ENCODE measurements at regions of chr7 and their contacts with region 1.

Region 1: DNA sequence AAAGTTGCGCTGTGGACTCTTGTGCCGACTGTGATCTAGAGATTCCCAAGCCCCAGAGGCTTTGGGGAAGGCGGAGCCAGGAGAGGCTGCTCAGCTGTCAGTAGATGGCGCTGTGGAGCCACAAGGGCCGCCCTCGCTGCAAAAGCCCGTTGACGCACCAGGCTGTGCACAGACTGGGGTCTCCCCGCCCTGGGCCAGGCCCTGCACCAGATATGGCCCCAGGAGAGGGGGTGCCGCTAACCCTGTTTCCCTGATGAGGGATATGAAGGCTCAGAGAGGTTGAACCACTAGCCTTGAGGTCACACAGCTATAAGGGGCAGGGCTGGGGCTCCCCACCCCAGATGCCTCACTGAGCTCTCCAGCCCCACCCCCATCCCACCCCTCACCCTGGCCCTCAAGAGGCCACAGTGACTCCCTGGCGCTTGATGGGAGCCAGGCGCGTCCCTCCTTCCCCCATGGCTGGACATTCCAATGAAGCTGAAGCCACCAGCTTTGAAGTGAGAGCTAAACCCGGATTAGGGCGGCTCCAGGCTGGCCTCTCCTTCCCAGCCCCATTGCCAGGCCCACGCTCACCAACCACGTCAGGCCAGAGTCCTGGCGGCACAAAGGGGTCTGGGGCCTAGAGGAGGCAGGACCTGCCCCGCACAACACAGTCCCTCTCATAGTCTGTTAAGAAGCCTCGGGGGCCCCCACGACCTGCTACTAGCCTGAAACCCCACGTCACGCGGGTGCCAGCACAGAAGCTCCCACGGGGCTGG is 26.4 kb downstream of the MYL10 start:
- DNase-seq: peak; percentile 52
- ATAC-seq: peak; percentile 97
- H3K4me3 ChIP-seq: no peak overlapping the region
- H3K27ac ChIP-seq: no peak overlapping the region
- H3K4me1 ChIP-seq: peaks cover 8% of the 10 kb centered on the region; the same call in 1 of the 2 replicates
- H3K27me3 ChIP-seq: no peaks in the 10 kb centered on the region
- CTCF ChIP-seq: peak; percentile 97

Region 2: DNA sequence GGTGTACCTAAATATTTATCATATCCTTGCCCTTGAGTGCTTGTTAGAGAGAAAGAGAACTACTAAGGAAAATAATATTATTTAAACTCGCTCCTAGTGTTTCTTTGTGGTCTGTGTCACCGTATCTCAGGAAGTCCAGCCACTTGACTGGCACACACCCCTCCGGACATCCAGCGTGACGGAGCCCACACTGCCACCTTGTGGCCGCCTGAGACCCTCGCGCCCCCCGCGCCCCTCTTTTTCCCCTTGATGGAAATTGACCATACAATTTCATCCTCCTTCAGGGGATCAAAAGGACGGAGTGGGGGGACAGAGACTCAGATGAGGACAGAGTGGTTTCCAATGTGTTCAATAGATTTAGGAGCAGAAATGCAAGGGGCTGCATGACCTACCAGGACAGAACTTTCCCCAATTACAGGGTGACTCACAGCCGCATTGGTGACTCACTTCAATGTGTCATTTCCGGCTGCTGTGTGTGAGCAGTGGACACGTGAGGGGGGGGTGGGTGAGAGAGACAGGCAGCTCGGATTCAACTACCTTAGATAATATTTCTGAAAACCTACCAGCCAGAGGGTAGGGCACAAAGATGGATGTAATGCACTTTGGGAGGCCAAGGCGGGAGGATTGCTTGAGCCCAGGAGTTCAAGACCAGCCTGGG is 464.3 kb before region 1 on chr7:
- CTCF ChIA-PET with region 1: no interaction called
- POLR2A ChIA-PET with region 1: no interaction called
- in situ Hi-C with region 1: no loop called
- intact Hi-C with region 1: no loop called
- DNase-seq: peak; percentile 100
- ATAC-seq: peak; percentile 84
- H3K4me3 ChIP-seq: no peak overlapping the region
- H3K27ac ChIP-seq: peak overlapping the region; percentile 91
- H3K4me1 ChIP-seq: peaks cover 39% of the 10 kb centered on the region
- H3K27me3 ChIP-seq: no peaks in the 10 kb centered on the region
- CTCF ChIP-seq: peak; percentile 94

Region 3: DNA sequence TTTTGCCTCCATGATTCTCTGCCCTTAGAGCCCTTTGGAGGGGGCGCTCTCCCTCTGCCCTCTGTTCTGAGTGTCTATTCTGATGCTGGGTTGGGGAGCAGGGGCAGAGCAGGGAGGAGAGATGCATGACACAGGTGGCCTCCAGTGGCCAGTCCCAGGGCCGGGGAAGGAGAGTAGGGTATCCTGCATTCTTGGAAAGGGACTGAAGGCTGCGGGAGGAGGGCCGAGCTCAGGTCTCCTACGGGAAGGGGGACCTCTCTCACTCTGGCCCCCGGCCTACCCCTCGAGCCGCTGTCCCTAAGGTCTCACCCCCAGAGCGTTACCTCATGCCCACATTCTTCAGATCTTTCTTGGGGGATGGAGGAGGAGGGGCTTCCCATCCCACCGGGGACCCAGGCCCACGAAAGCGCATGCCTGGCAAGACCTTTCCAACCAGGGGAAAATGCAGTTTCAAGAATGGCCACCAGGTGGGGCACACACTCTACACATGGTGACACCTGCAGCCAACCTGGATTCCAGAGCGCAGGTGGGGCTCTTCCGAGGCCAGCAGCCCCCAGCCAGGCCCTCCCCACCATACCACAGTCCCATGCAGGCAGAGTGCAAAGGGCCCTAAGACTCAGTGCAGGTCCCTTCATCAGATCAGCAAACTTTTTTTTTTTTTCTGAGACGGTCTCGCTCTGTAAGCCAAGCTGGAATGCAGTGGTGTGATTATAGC is 60.0 kb before region 1 on chr7:
- CTCF ChIA-PET with region 1: no interaction called
- POLR2A ChIA-PET with region 1: no interaction called
- in situ Hi-C with region 1: no loop called
- intact Hi-C with region 1: no loop called
- DNase-seq: peak; percentile 48
- ATAC-seq: peak; percentile 70
- H3K4me3 ChIP-seq: peak overlapping the region in 1 of 2 experiments; percentile 19; a peak in 1 of 4 replicates
- H3K27ac ChIP-seq: no peak overlapping the region
- H3K4me1 ChIP-seq: peaks cover 13% of the 10 kb centered on the region
- H3K27me3 ChIP-seq: no peaks in the 10 kb centered on the region
- CTCF ChIP-seq: peak; percentile 94

Region 4: DNA sequence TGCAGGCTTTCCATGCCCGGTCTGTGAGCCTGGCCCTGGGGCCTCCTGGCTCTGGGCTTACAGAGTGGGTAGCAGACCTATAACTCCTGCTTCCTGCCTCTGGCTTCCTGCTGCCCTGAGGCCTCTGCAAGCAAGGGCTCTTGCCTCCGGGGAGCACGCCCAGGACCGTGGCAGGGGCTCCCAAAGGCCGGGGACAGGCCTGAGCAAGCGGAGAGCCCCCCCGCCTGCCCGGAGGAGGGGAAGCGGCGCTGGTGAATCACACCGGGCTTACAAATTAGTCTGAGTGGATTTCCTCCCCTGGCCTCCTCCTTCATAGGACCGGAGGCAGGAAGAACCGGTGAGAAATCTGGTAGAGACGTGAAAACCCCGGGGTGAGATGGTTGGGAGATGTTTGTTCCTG is 27.9 kb after region 1 on chr7:
- CTCF ChIA-PET with region 1: interaction called, 12 read pairs
- POLR2A ChIA-PET with region 1: no interaction called
- in situ Hi-C with region 1: no loop called
- intact Hi-C with region 1: no loop called
- DNase-seq: no peak
- ATAC-seq: peak; percentile 71
- H3K4me3 ChIP-seq: peak overlapping the region in 1 of 2 experiments; percentile 0; a peak in 1 of 4 replicates
- H3K27ac ChIP-seq: no peak overlapping the region
- H3K4me1 ChIP-seq: peaks cover 15% of the 10 kb centered on the region
- H3K27me3 ChIP-seq: no peaks in the 10 kb centered on the region
- CTCF ChIP-seq: no peak

Region 5: GRCh38 chr7:101644879-101645278 is 42.2 kb after region 1 on chr7:
- CTCF ChIA-PET with region 1: interaction called, 10 read pairs
- POLR2A ChIA-PET with region 1: no interaction called
- in situ Hi-C with region 1: no loop called
- intact Hi-C with region 1: no loop called
- DNase-seq: no peak
- ATAC-seq: peak; percentile 64
- H3K4me3 ChIP-seq: peak overlapping the region in 1 of 2 experiments; percentile 31; a peak in 2 of 4 replicates
- H3K27ac ChIP-seq: no peak overlapping the region
- H3K4me1 ChIP-seq: peaks cover 7% of the 10 kb centered on the region
- H3K27me3 ChIP-seq: no peaks in the 10 kb centered on the region
- CTCF ChIP-seq: no peak

Region 6: GRCh38 chr7:101688183-101688831 is 85.6 kb after region 1 on chr7:
- CTCF ChIA-PET with region 1: interaction called, 3 read pairs
- POLR2A ChIA-PET with region 1: no interaction called
- in situ Hi-C with region 1: no loop called
- intact Hi-C with region 1: loop called (anchors 10 kb)
- DNase-seq: no peak
- ATAC-seq: peak; percentile 95
- H3K4me3 ChIP-seq: peak overlapping the region; percentile 31 to 49
- H3K27ac ChIP-seq: peak overlapping the region; percentile 69
- H3K4me1 ChIP-seq: peaks cover 7% of the 10 kb centered on the region; the same call in 1 of the 2 replicates
- H3K27me3 ChIP-seq: no peaks in the 10 kb centered on the region
- CTCF ChIP-seq: peak; percentile 98

Region 7: DNA sequence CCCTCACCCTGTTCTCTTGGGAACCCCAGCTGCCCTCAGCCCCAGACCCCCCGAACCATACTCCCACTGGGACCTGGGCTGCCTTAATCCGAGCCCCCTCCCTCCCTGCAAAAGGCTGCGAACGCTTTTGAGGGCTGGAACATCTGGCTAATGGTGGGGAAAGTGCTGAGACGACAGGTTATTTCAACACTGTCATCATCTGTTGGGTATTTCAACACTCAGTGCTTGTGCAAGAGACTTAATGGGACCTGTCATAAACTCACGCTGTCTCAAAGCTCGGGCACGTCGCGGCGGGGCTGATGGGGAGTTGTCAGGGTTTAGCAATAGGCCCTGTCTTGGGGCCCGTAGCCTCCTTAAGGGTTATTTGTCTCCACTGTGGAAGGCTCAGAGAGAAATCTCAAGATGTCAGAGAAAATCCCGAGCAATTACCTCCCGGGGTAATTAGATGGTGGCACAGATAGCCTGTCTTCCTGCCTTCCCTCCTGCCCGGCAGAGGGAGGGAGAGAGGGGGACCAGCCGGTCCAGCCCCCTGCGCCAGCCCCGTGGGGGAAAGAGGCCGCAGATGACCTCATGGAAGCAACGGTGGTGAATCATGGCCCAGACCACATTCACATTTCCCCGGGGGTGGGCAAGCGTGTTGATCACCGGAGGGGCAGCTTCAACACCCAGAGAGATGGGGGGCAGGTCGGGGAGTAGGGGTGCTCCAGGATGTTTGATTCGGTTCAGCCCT is 115.1 kb after region 1 on chr7:
- CTCF ChIA-PET with region 1: interaction called, 10 read pairs
- POLR2A ChIA-PET with region 1: no interaction called
- in situ Hi-C with region 1: no loop called
- intact Hi-C with region 1: no loop called
- DNase-seq: no peak
- ATAC-seq: no peak
- H3K4me3 ChIP-seq: no peak overlapping the region
- H3K27ac ChIP-seq: no peak overlapping the region
- H3K4me1 ChIP-seq: no peaks in the 10 kb centered on the region
- H3K27me3 ChIP-seq: no peaks in the 10 kb centered on the region
- CTCF ChIP-seq: no peak

Region 8: GRCh38 chr7:101815835-101816493 is 213.3 kb after region 1 on chr7:
- CTCF ChIA-PET with region 1: interaction called, 5 read pairs
- POLR2A ChIA-PET with region 1: no interaction called
- in situ Hi-C with region 1: no loop called
- intact Hi-C with region 1: loop called (anchors 5 kb)
- DNase-seq: no peak
- ATAC-seq: peak; percentile 82
- H3K4me3 ChIP-seq: peak overlapping the region; percentile 60 to 66
- H3K27ac ChIP-seq: no peak overlapping the region
- H3K4me1 ChIP-seq: peaks cover 28% of the 10 kb centered on the region
- H3K27me3 ChIP-seq: no peaks in the 10 kb centered on the region
- CTCF ChIP-seq: peak; percentile 68

Measured in Panc1 (cell line).